ENCODE measurements at regions of chr7 and their contacts with region 1.

Region 1: DNA sequence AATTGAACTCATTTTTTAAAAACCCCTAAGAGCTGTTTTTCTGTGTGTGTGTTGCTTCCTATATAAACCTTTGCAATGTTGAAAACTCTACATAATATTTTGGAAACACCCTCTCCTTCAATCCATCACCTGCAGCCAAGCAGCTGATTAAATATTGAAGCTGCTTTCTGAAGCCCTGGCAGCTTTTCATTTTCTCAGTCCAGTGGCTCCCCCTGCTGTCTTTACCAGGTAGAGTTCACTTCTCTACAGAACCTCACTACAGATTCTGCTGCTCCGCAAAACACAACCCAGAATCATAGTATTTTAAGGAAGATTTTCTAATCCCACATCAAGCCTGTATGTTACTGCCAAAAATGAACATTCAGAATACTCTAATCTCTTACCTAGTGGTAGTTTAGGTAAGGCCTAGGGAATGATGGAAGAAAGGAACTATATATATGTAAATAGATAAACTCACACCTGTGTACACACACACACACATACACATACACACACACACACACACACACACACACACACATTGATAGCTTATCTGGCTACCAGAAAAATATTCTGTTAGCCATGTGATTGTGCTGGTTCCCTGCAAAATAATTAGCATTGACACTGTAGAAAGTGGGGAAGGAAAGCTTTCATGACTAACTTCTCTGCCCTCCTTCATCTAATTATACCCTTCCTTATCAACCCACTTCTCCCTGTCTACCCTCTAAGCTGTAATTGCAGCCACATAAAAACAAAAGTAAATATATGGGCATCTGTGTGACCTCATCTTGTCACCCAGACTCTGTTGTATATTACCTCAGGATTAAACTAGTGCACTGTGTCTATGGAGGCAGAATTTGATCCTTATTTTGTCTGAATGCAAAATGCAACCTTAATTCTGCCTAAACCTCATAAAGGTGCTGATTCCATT is 229.5 kb upstream of the FZD1 start:
- DNase-seq: peak; percentile 34
- H3K4me3 ChIP-seq: no peak overlapping the region
- H3K27ac ChIP-seq: no peak overlapping the region
- H3K4me1 ChIP-seq: no peaks in the 10 kb centered on the region
- H3K27me3 ChIP-seq: no peaks in the 10 kb centered on the region
- CTCF ChIP-seq: peak; percentile 47 to 78

Region 2: GRCh38 chr7:90455163-90456030 is 579.3 kb before region 1 on chr7:
- CTCF ChIA-PET with region 1: interaction called, 10 read pairs
- dilution Hi-C with region 1: no loop called
- in situ Hi-C with region 1: loop called in 1 of 2 experiments (anchors 25 kb)
- intact Hi-C with region 1: loop called (anchors 1 kb)
- DNase-seq: peak; percentile 41
- H3K4me3 ChIP-seq: peak overlapping the region in 1 of 3 experiments; percentile 7
- H3K27ac ChIP-seq: no peak overlapping the region
- H3K4me1 ChIP-seq: no peaks in the 10 kb centered on the region
- H3K27me3 ChIP-seq: no peaks in the 10 kb centered on the region
- CTCF ChIP-seq: peak; percentile 70 to 72

Region 3: GRCh38 chr7:90552521-90552920 is 482.2 kb before region 1 on chr7:
- CTCF ChIA-PET with region 1: no interaction called
- dilution Hi-C with region 1: no loop called
- in situ Hi-C with region 1: loop called in 1 of 2 experiments (anchors 10 kb)
- intact Hi-C with region 1: loop called (anchors 1 kb)
- DNase-seq: peak; percentile 10
- H3K4me3 ChIP-seq: no peak overlapping the region
- H3K27ac ChIP-seq: no peak overlapping the region
- H3K4me1 ChIP-seq: no peaks in the 10 kb centered on the region
- H3K27me3 ChIP-seq: no peaks in the 10 kb centered on the region
- CTCF ChIP-seq: peak; percentile 20 to 43

Region 4: DNA sequence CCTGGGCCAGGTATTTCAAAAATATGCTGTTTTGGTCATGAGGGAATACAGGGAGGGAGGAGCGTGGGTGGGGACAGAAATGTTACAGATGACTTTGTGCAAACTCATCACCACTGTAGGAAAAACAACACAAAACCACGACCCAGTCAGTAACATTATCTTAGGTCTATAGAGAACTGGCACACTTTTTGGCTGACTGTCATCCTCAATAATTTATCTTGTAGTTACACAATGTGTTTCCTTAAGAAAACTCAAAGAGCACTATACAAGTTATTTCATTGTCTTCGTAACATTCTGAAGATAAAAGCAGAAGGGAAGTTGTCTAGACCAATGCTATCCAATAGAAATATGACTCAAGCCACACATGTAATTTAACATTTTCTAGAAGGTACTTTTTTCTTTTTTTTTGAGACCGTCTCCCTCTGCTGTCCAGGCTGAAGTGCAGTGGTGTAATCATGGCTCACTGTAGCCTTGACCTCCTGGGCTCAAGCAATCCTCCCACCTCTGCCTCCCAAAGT is 455.5 kb before region 1 on chr7:
- CTCF ChIA-PET with region 1: no interaction called
- dilution Hi-C with region 1: no loop called
- in situ Hi-C with region 1: no loop called
- intact Hi-C with region 1: no loop called
- DNase-seq: peak; percentile 95
- H3K4me3 ChIP-seq: no peak overlapping the region
- H3K27ac ChIP-seq: peak overlapping the region; percentile 64
- H3K4me1 ChIP-seq: peaks cover 10% of the 10 kb centered on the region
- H3K27me3 ChIP-seq: no peaks in the 10 kb centered on the region
- CTCF ChIP-seq: peak; percentile 12 to 17

Region 5: DNA sequence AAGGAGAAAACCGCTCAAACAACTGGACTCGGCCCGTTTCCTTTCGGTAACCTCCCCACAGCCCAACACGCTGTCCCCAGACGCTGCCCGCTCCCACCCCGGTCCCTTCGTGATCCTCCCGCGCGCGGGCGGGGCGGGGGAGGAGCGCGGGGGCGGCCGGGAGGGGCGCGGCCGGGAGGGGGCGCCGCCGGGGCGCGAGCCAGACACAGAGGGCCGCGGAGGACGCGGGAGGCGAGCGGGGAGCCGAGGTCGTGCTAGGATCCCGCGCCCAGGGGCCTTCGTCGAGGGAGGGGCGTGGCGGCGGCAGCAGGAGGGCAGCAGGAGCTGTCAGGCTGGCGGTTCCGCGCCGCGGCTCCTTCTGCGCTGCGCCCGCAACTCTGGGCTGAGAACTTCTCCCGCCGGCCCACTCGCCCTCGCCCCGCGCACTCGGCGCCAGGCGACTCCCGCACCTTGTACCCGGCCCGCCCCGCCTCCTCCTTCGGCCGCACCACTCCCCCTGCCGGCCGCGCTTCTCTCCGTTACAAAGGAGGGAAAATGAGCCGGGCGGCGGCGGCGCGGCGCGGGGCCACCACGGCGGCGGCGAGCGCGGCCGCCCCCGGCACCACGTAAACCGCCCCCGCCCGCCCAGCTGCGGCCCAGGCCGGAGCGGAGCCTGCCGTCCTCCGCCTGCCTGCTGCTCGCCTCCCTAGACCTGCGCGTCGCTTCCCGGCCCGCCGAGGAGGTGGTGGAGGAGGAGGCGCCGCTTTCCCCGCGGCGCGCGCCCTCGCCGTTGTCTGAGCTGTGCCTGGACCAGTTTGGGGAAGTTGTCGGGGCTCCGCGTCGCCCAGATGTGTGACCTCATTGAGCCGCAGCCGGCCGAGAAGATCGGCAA is 438.7 kb before region 1 on chr7 and contains the start of gene CDK14:
- CTCF ChIA-PET with region 1: interaction called, 6 read pairs
- dilution Hi-C with region 1: no loop called
- in situ Hi-C with region 1: no loop called
- intact Hi-C with region 1: loop called (anchors 1 kb)
- DNase-seq: peak; percentile 59
- H3K4me3 ChIP-seq: peak within 1 kb of the TSS; percentile 80 to 87 (median 83)
- H3K27ac ChIP-seq: peak within 1 kb of the TSS; percentile 63
- H3K4me1 ChIP-seq: peaks cover 21% of the 10 kb centered on the region
- H3K27me3 ChIP-seq: no peaks in the 10 kb centered on the region
- CTCF ChIP-seq: peak in 1 of 2 donors; percentile 56
- total RNA-seq, gene CDK14: 23.9 to 43.3 TPM

Region 6: DNA sequence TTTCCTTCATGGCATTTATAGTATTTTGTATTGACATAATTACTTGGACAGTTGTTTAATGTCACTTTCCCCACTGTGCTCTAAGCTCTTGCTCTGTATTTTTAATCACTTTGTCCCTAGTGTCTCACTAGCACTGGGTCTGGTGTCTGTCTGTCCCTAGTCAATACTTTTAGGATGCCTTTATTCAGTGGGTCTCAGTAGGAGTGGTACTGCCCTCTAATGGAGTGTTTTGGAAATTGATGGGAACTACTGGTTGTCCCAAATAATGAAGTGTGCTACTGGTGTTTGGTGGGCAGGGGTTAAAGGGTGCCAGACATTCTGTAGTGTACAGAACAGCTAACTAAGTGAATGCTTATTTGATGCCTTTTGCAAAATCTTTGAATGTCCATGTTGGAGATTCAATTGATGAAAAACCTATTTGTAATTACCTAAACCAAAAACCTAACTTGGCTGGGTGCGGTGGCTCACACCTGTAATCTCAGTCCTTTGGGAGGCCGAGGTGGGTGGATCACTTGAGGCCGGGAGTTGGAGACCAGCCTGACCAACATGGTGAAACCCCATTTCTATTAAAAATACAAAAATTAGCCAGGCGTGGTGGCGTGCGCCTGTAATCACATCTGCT is 405.3 kb before region 1 on chr7:
- CTCF ChIA-PET with region 1: interaction called, 5 read pairs
- dilution Hi-C with region 1: no loop called
- in situ Hi-C with region 1: no loop called
- intact Hi-C with region 1: loop called (anchors 1 kb)
- DNase-seq: peak; percentile 44
- H3K4me3 ChIP-seq: no peak overlapping the region
- H3K27ac ChIP-seq: no peak overlapping the region
- H3K4me1 ChIP-seq: peaks cover 20% of the 10 kb centered on the region
- H3K27me3 ChIP-seq: no peaks in the 10 kb centered on the region
- CTCF ChIP-seq: peak; percentile 68 to 75

Region 7: GRCh38 chr7:90708841-90709317 is 325.8 kb before region 1 on chr7:
- CTCF ChIA-PET with region 1: no interaction called
- dilution Hi-C with region 1: no loop called
- in situ Hi-C with region 1: no loop called
- intact Hi-C with region 1: loop called (anchors 1 kb)
- DNase-seq: no peak
- H3K4me3 ChIP-seq: no peak overlapping the region
- H3K27ac ChIP-seq: no peak overlapping the region
- H3K4me1 ChIP-seq: peaks cover 7% of the 10 kb centered on the region
- H3K27me3 ChIP-seq: no peaks in the 10 kb centered on the region
- CTCF ChIP-seq: peak; percentile 51 to 56

Measured in mammary epithelial cell (primary cell).